Mammary epithelial cell (primary cell): ENCODE measurements at regions of chrX and their contacts with region 1.

Region 1: DNA sequence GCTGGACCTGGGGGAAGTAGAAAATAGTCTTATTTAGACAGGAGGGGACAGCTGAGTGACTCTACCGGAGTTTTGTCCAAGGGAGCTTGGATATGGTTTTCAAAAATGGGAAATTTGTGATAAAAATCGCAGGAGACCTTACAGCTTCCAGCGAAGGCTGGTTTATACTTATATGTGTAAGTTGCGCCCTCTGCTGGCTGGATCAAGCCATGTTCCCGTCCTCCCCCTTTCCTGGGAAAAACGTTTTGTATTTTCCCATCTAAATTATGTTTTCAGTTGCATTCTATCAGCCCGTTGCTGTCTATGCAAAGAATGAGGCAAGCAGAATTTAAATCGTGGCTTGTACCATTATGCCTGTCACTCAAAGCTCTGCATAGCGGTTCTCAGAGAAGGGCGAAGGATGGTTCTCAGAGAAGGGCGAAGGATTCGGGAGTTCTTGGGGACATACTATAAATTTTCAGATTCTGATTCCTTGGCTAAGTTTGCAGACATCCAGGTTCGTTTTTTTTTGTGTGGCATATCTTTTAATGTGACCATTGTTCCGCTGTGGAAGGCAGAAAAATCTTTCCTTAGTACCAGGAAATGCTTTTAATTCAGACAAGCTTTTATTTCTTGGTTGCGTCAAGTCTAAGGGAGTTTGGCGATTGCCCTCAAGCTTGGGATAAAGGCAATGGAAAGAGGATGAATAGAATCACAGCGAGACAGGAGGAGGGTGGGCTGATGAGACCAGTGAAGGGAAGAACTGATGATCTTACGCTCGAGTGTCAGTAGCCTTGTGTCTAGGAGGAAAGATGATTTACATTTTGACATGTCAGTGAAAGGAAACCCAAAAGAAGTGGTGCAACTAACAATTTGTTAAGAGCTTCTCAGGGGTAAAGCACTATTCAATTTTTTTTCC is 128.5 kb upstream of the ARX start:
- DNase-seq: peak; percentile 15
- H3K4me3 ChIP-seq: no peak overlapping the region
- H3K27ac ChIP-seq: no peak overlapping the region
- H3K4me1 ChIP-seq: no peaks in the 10 kb centered on the region
- H3K27me3 ChIP-seq: no peaks in the 10 kb centered on the region
- CTCF ChIP-seq: peak; percentile 70 to 80

Region 2: DNA sequence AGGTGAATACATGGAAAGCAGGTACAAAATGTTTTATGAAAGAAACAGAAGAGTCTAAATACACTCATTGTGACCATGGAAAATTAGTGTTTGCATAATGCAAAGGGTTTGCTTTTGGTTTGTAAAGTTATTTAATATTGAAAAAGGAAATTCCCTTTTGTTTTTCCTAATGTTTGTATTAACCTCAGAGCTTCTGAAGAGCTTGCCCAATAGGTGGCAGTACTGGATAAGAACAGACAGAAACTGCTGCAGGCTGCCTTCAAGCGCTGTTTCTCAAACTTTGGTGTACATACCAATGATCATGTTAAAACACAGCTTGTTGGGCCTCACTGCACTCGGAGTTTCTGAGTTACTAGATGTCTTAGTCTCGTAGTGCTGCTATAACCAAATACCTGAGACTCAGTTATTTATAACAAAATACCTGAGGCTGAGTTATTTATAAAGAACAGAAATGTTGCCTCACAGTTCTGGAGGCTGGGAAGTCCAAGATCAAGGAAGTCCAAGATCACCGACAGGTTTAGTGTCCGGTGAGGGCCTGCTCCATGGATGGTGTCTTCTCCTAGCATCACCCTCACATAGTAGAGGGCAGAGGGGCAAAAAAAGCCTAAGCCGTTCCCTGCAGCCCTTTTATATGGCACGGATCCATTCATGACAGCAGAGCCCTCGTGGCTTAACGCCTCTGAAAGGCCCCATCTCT is 884.6 kb before region 1 on chrX:
- CTCF ChIA-PET with region 1: no interaction called
- dilution Hi-C with region 1: no loop called
- in situ Hi-C with region 1: no loop called
- intact Hi-C with region 1: loop called (anchors 1 kb)
- DNase-seq: peak; percentile 64
- H3K4me3 ChIP-seq: no peak overlapping the region
- H3K27ac ChIP-seq: no peak overlapping the region
- H3K4me1 ChIP-seq: no peaks in the 10 kb centered on the region
- H3K27me3 ChIP-seq: no peaks in the 10 kb centered on the region
- CTCF ChIP-seq: peak; percentile 79 to 83

Region 3: DNA sequence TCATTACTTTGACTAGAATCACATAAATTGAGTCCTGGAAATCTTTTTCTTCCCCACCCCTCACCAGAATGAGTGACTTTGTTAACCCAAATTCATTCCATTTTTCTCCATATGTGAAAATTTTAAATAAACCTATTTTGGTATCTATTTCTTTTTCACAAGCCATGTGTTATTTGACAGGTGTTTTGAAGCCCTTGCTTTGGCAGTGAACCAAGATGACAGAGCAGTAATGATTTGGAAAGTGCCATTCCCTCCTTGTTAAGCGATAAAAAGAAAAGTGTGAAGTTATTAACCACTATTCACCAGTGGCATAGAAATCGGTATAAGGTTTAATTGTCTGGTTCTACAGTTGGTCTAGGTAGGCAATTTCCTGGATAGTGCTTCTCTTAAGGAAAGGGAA is 384.5 kb before region 1 on chrX:
- CTCF ChIA-PET with region 1: no interaction called
- dilution Hi-C with region 1: no loop called
- in situ Hi-C with region 1: loop called in 1 of 2 experiments (anchors 5 kb)
- intact Hi-C with region 1: no loop called
- DNase-seq: no peak
- H3K4me3 ChIP-seq: no peak overlapping the region
- H3K27ac ChIP-seq: no peak overlapping the region
- H3K4me1 ChIP-seq: no peaks in the 10 kb centered on the region
- H3K27me3 ChIP-seq: no peaks in the 10 kb centered on the region
- CTCF ChIP-seq: no peak

Region 4: DNA sequence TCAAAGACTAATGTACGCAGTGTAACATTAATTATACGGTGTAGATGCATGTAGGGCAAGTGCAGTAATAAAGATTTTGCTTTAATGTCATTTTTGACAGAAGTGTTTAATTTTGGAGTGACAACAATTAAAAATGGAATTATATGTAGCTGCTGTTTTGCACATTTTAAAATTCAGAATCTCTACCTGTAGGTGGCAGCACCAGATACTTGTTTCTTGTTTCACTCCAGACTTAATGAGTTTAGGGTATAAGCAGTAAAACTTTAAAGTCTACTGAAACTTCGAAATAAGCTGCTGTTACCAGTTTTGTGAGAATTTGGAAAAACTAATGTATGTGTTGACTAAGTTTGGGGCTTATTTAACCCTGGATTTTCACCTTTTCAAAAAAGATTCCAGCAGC is 305.7 kb before region 1 on chrX:
- CTCF ChIA-PET with region 1: interaction called, 4 read pairs
- dilution Hi-C with region 1: no loop called
- in situ Hi-C with region 1: loop called (anchors 10 to 25 kb)
- intact Hi-C with region 1: loop called (anchors 1 kb)
- DNase-seq: peak; percentile 6
- H3K4me3 ChIP-seq: no peak overlapping the region
- H3K27ac ChIP-seq: no peak overlapping the region
- H3K4me1 ChIP-seq: no peaks in the 10 kb centered on the region
- H3K27me3 ChIP-seq: no peaks in the 10 kb centered on the region
- CTCF ChIP-seq: peak; percentile 50 to 55

Region 5: GRCh38 chrX:24846551-24847157 is 297.6 kb before region 1 on chrX:
- CTCF ChIA-PET with region 1: no interaction called
- dilution Hi-C with region 1: no loop called
- in situ Hi-C with region 1: loop called (anchors 10 to 25 kb)
- intact Hi-C with region 1: no loop called
- DNase-seq: no peak
- H3K4me3 ChIP-seq: no peak overlapping the region
- H3K27ac ChIP-seq: no peak overlapping the region
- H3K4me1 ChIP-seq: no peaks in the 10 kb centered on the region
- H3K27me3 ChIP-seq: no peaks in the 10 kb centered on the region
- CTCF ChIP-seq: no peak

Region 6: GRCh38 chrX:25034889-25035288 is 109.4 kb before region 1 on chrX:
- CTCF ChIA-PET with region 1: no interaction called
- dilution Hi-C with region 1: no loop called
- in situ Hi-C with region 1: loop called in 1 of 2 experiments (anchors 10 kb)
- intact Hi-C with region 1: loop called (anchors 1 kb)
- DNase-seq: no peak
- H3K4me3 ChIP-seq: no peak overlapping the region
- H3K27ac ChIP-seq: no peak overlapping the region
- H3K4me1 ChIP-seq: no peaks in the 10 kb centered on the region
- H3K27me3 ChIP-seq: no peaks in the 10 kb centered on the region
- CTCF ChIP-seq: peak in 1 of 2 donors; percentile 22